HEK293 (cell line): ENCODE measurements at regions of chr10 and their contacts with region 1.

Region 1: GRCh38 chr10:119675483-119676170 is 24.4 kb downstream of the BAG3 start:
- H3K4me3 ChIP-seq: no peak overlapping the region
- H3K27ac ChIP-seq: no peak overlapping the region
- H3K4me1 ChIP-seq: no peaks in the 10 kb centered on the region
- CTCF ChIP-seq: no peak

Region 2: GRCh38 chr10:119686439-119687191 is 11.0 kb after region 1 on chr10:
- CTCF ChIA-PET with region 1: interaction called, 10 read pairs
- POLR2A ChIA-PET with region 1: interaction called, 3 read pairs
- H3K4me3 ChIP-seq: peak overlapping the region; percentile 12
- H3K27ac ChIP-seq: peak overlapping the region; percentile 51; the same call in 1 of the 2 replicates
- H3K4me1 ChIP-seq: no peaks in the 10 kb centered on the region
- CTCF ChIP-seq: peak; percentile 94

Region 3: DNA sequence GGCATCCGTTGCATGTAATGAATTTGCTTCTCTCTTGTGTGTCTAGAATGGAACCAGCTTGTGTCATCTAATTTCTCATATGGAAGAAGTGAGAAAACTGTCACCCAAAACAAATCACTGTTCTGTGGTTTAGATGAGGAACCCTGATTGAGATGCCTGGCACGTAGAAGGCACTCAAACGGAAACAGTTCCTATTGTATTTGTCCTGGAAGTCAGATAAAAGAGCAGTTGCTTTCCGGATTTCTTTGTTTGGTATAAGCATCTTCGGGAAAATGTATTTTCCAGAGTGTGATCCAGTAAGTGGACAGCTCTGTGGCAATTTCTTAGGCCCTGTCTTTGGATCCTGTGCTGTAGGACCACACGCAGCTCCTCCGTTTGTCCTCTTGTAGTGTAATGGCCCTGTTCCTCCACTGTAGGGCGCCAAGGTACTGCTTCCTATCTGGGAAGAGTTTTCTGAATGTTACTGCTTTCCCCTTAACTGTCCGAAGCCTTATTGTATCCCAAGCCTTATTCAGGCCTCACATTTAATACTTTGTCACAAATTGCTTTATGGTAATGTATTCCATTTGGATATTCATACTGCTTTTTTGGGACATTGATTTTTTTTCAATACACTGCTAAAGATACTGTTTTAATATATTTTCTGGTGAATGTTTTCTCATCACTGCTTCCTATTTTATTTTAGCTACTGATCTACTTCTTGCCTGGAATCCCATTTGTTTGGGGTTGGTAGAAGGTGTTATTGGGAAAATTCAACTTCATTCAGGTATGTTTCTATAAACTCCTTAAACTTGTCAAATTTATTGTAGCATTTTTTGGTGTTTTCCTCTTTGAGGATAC is 75.0 kb after region 1 on chr10:
- CTCF ChIA-PET with region 1: no interaction called
- POLR2A ChIA-PET with region 1: no interaction called
- H3K4me3 ChIP-seq: no peak overlapping the region
- H3K27ac ChIP-seq: no peak overlapping the region
- H3K4me1 ChIP-seq: peaks cover 17% of the 10 kb centered on the region
- CTCF ChIP-seq: peak; percentile 77